HEK293 (cell line): ENCODE measurements at regions of chr19 and their contacts with region 1.

Region 1: DNA sequence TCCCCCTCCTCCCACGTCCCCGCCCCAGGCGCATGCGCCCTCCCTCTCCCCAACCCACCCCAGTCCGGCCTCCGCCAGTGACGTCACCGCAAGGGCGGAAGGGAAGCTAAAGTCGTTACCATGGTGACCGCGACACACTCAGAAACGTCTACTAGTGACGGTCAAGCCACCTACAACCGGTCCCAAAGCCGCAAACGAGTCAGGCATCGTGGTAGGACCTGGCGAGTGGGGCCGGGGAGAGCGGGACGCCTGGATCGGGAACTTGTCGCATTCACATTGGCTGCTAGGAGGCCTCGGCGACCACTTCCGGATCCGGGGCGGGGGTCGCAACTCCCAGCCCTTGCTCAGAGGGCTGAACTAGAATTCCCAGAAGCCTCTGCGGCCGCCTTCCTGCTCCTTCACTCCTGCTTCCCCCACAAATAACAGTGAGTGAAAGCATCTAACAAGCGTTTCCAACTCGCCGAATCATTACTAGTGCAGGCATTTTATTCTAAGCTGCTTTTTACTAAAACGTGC is at the start of gene ZSCAN5A:
- H3K4me3 ChIP-seq: peak within 1 kb of the TSS; percentile 100
- H3K27ac ChIP-seq: peak within 1 kb of the TSS; percentile 90
- H3K4me1 ChIP-seq: 0 out of 2 replicates have a peak, but pooled peaks cover 2% of the 10 kb centered on the region
- CTCF ChIP-seq: no peak

Region 2: DNA sequence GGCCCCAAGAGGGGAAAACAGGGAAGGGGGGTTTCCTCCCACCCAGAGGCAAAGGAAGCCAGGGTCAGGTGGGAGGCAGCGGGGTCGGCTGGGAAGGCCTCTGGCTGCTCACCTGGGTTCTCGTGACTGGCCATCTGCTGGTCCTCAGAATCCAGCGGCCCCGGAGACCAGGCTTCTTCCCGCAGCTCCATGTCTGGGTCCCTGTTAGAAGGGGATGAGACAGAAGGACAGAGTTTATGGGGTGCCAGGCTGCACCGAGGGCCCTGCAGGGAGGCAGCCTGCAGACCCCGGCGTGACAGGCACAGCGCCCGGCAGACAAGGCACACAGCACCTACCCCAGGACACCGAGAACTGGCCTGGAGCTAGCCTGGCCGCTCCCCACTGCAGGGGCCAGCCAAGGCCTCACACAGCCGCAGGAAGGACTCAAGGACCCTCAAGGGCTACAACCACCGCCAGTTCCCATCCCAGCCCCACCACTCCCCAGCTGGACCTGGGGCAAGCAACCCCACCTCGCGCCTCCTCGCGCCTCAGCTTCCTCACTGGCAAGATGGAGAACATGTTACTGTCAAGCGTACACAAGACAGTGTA is 211.5 kb before region 1 on chr19:
- CTCF ChIA-PET with region 1: interaction called, 3 read pairs
- POLR2A ChIA-PET with region 1: interaction called, 11 read pairs
- H3K4me3 ChIP-seq: no peak overlapping the region
- H3K27ac ChIP-seq: no peak overlapping the region
- H3K4me1 ChIP-seq: peaks cover 10% of the 10 kb centered on the region
- CTCF ChIP-seq: no peak

Region 3: GRCh38 chr19:56301182-56301581 is 13.4 kb before region 1 on chr19:
- CTCF ChIA-PET with region 1: interaction called, 51 read pairs
- POLR2A ChIA-PET with region 1: no interaction called
- H3K4me3 ChIP-seq: no peak overlapping the region
- H3K27ac ChIP-seq: no peak overlapping the region
- H3K4me1 ChIP-seq: no peaks in the 10 kb centered on the region
- CTCF ChIP-seq: no peak

Region 4: DNA sequence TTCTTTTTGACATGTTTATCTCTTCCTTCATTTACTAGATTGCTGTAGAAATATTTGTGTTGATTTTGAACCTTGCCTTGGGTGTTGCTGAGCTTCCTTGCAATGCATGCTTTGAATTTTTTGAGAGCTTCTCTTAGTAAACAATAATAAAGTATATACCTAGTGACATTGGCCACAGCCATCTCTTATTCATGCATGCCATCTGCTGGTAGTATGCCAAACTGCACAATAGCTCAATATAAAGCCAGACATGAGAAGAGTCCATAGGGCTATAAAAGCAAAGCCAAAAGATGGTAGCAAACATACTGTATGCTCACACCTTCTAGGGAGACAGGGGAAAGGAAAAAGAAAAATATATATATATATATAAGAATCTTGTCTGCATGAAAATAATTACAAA is 18.9 kb after region 1 on chr19:
- CTCF ChIA-PET with region 1: interaction called, 17 read pairs
- POLR2A ChIA-PET with region 1: no interaction called
- H3K4me3 ChIP-seq: no peak overlapping the region
- H3K27ac ChIP-seq: no peak overlapping the region
- H3K4me1 ChIP-seq: no peaks in the 10 kb centered on the region
- CTCF ChIP-seq: no peak

Region 5: GRCh38 chr19:56423276-56423984 is 108.8 kb after region 1 on chr19:
- CTCF ChIA-PET with region 1: no interaction called
- POLR2A ChIA-PET with region 1: no interaction called
- H3K4me3 ChIP-seq: no peak overlapping the region
- H3K27ac ChIP-seq: no peak overlapping the region
- H3K4me1 ChIP-seq: no peaks in the 10 kb centered on the region
- CTCF ChIP-seq: no peak

Region 6: DNA sequence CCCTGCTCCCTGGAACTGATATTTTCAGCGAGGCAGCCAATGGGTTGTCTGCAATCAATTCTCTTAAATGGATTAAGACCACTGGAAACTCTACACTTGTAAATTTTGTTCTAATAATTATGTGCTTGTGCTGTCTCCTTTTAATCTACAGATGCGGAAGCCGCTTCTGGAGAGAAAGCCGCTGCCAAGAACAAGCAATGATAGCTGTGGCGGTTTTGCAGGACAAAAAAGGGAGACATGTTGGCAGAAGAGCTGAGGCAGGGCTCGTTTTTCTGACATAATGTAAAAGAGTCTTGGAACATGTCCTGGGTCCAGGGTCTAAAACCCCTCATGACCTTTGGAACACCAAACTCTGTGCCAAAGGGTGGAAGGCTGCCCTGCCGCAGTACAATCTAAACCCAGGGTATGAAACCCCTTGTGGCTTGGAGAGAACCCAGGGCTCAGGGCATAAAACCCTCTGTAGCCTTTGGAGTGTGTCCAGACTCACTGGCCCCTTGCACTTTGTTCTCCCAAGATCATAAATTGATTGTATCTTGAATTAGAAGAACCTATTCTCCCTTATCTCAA is 1589.1 kb after region 1 on chr19:
- CTCF ChIA-PET with region 1: no interaction called
- POLR2A ChIA-PET with region 1: interaction called, 10 read pairs
- H3K4me3 ChIP-seq: no peak overlapping the region
- H3K27ac ChIP-seq: no peak overlapping the region
- H3K4me1 ChIP-seq: no peaks in the 10 kb centered on the region
- CTCF ChIP-seq: no peak